Endothelial cell of umbilical vein (primary cell): ENCODE measurements at regions of chr15 and their contacts with region 1.

Region 1: DNA sequence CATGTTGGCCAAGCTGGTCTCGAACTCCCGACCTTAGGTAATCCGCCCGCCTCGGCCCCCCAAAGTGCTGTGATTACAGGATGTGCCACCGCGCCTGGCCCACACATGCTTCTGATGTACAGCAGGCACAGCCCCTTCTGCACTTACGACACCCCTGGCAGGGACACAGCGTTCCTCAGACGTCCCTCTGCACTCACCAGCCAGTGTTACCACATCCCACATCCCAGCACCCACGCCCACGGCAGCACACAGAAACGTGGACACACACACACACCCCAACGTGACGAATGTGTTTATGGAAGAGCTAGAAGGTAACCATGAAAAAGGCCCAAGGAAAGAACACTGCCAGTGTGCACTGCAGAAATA is 576 bp upstream of the RPAP1 start:
- DNase-seq: no peak
- H3K4me3 ChIP-seq: no peak overlapping the region
- H3K27ac ChIP-seq: no peak overlapping the region
- H3K4me1 ChIP-seq: peaks cover 6% of the 10 kb centered on the region
- H3K27me3 ChIP-seq: no peaks in the 10 kb centered on the region
- CTCF ChIP-seq: no peak
- POLR2A ChIP-seq: no peak

Region 2: GRCh38 chr15:41501191-41501917 is 43.3 kb before region 1 on chr15:
- CTCF ChIA-PET with region 1: interaction called, 3 read pairs
- POLR2A ChIA-PET with region 1: no interaction called
- dilution Hi-C with region 1: no loop called
- intact Hi-C with region 1: loop called (anchors 5 kb)
- DNase-seq: peak; percentile 46
- H3K4me3 ChIP-seq: peak overlapping the region in 1 of 3 experiments; percentile 34
- H3K27ac ChIP-seq: no peak overlapping the region
- H3K4me1 ChIP-seq: peaks cover 15% of the 10 kb centered on the region
- H3K27me3 ChIP-seq: peaks cover 27 to 36% of the 10 kb centered on the region in 2 experiments
- CTCF ChIP-seq: no peak
- POLR2A ChIP-seq: no peak

Region 3: GRCh38 chr15:41585127-41586047 is 40.8 kb after region 1 on chr15:
- CTCF ChIA-PET with region 1: interaction called, 6 read pairs
- POLR2A ChIA-PET with region 1: no interaction called
- dilution Hi-C with region 1: no loop called
- intact Hi-C with region 1: loop called (anchors 1 kb)
- DNase-seq: peak; percentile 73
- H3K4me3 ChIP-seq: peak overlapping the region; percentile 29 to 59 (median 51)
- H3K27ac ChIP-seq: no peak overlapping the region
- H3K4me1 ChIP-seq: peaks cover 9% of the 10 kb centered on the region
- H3K27me3 ChIP-seq: peaks cover 2 to 5% of the 10 kb centered on the region in 2 experiments
- CTCF ChIP-seq: peak; percentile 32 to 62
- POLR2A ChIP-seq: no peak

Region 4: GRCh38 chr15:41714291-41714690 is 169.7 kb after region 1 on chr15:
- CTCF ChIA-PET with region 1: no interaction called
- POLR2A ChIA-PET with region 1: no interaction called
- dilution Hi-C with region 1: no loop called
- intact Hi-C with region 1: no loop called
- DNase-seq: no peak
- H3K4me3 ChIP-seq: no peak overlapping the region
- H3K27ac ChIP-seq: no peak overlapping the region
- H3K4me1 ChIP-seq: no peaks in the 10 kb centered on the region
- H3K27me3 ChIP-seq: no peaks in the 10 kb centered on the region
- CTCF ChIP-seq: no peak
- POLR2A ChIP-seq: no peak